ENCODE measurements at regions of chr6 and their contacts with region 1.

Region 1: DNA sequence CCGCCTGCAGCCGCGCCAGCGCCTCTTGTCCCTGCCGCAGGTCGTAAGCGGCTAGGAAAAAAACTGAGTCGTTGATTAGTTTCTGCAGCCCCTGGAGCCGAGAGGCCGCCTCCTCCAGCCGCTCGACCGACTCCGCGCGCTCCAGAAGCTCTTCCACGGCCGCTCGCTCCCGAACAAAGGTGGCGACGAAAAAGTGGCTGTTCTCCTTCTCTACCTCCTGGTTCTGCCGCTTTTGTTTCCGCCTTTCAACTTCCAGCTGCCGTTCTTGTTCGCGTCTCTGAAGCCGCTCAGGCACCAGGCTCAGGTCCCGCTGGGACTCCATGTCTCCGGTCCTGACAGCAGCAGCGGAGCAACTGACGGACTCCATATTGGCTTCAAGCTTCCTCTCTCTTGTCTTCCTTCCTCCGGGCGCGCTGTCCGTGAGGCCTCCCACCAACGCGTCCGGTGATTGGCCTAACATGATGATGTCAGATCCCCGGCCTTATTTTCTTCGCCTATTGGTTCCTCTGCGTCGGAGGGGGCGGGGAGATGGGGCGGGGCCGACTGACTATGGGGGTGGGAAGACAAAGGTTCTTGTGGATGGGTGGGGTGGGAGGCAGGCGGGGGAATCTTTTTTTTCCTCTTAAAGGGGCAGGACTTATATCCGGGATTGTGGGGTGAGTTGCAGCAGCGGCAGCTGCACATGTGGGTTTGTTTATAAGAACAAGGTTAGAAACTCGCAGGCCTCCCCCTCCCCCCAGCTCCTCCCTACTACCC is at the start of gene TBCC:
- DNase-seq: peak in 34 of 35 experiments; percentile 84 to 98 (median 94)
- ATAC-seq: peak; percentile 74 to 81 (median 76)
- H3K4me3 ChIP-seq: peak within 1 kb of the TSS; percentile 77 to 100
- H3K4me3 Mint-ChIP-seq: peak within 1 kb of the TSS; percentile 89 to 100 (median 100)
- H3K27ac ChIP-seq: peak within 1 kb of the TSS; percentile 92
- H3K27ac Mint-ChIP-seq: peak within 1 kb of the TSS; percentile 100
- H3K4me1 ChIP-seq: peaks cover 12 to 46% of the 10 kb centered on the region in 2 experiments
- H3K4me1 Mint-ChIP-seq: peaks cover 27 to 37% (median 33%) of the 10 kb centered on the region in 3 donors
- H3K27me3 ChIP-seq: peaks cover 0 to 2% of the 10 kb centered on the region in 2 experiments
- H3K27me3 Mint-ChIP-seq: no peaks in the 10 kb centered on the region
- total RNA-seq, gene TBCC: 56.5 to 74.8 (median 59.4) TPM

Region 2: GRCh38 chr6:42417641-42418112 is 328.2 kb before region 1 on chr6:
- CTCF ChIA-PET with region 1: interaction called in 1 of 2 experiments, 10 read pairs
- POLR2A ChIA-PET with region 1: no interaction called
- DNase-seq: peak in 34 of 35 experiments; percentile 17 to 74 (median 58)
- ATAC-seq: peak; percentile 88 to 91 (median 90)
- H3K4me3 ChIP-seq: no peak overlapping the region
- H3K4me3 Mint-ChIP-seq: peak overlapping the region; percentile 18 to 62 (median 54)
- H3K27ac ChIP-seq: no peak overlapping the region
- H3K27ac Mint-ChIP-seq: peak overlapping the region; percentile 80 to 85
- H3K4me1 ChIP-seq: peaks cover 10 to 36% of the 10 kb centered on the region in 2 experiments
- H3K4me1 Mint-ChIP-seq: peaks cover 74 to 84% (median 83%) of the 10 kb centered on the region in 3 donors
- H3K27me3 ChIP-seq: no peaks in the 10 kb centered on the region
- H3K27me3 Mint-ChIP-seq: no peaks in the 10 kb centered on the region

Region 3: DNA sequence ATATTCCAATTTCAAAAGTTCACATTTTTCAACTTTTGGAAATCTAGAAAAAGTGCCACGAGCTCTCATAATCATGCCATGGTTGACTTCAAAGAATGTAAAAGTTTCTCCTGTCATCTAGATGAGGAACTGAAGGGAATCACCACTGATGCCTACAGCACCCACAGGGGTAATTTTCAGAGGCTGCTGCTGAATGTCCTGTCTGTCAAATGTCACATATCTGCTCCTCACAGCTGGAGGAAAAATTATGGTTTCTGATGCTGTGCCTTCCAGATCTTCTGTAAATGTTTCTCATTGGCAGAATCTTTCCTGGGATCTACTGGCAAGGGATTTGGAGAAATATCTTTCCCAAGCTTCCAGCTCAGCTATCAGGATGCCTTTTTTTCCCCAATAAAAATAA is 261.6 kb before region 1 on chr6:
- CTCF ChIA-PET with region 1: no interaction called
- POLR2A ChIA-PET with region 1: no interaction called
- DNase-seq: no peak
- ATAC-seq: no peak
- H3K4me3 ChIP-seq: no peak overlapping the region
- H3K4me3 Mint-ChIP-seq: no peak overlapping the region
- H3K27ac ChIP-seq: no peak overlapping the region
- H3K27ac Mint-ChIP-seq: no peak overlapping the region
- H3K4me1 ChIP-seq: no peaks in the 10 kb centered on the region
- H3K4me1 Mint-ChIP-seq: no peaks in the 10 kb centered on the region
- H3K27me3 ChIP-seq: no peaks in the 10 kb centered on the region
- H3K27me3 Mint-ChIP-seq: no peaks in the 10 kb centered on the region

Region 4: DNA sequence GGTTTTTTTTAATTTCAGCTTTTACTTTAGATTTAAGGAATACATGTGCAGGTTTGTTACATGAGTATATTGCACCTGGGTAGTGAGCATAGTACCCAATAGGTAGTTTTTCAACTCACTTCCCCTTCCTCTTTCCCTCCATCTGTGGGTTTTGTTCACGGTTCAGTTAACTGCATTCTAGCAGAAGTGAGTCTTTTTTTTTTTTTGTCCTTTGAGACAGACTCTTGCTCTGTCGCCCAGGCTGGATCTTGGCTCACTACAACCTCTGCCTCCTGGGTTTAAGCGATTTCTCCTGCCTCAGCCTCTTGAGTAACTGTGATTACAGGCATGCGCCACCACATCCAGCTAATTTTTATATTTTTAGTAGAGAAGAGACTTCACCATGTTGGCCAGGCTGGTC is 173.4 kb before region 1 on chr6:
- CTCF ChIA-PET with region 1: no interaction called
- POLR2A ChIA-PET with region 1: no interaction called
- DNase-seq: peak in 2 of 35 experiments; percentile 23 to 47
- ATAC-seq: peak; percentile 55 to 94 (median 74)
- H3K4me3 ChIP-seq: no peak overlapping the region
- H3K4me3 Mint-ChIP-seq: peak overlapping the region; percentile 28 to 45 (median 36)
- H3K27ac ChIP-seq: peak overlapping the region; percentile 3
- H3K27ac Mint-ChIP-seq: peak overlapping the region; percentile 61 to 84
- H3K4me1 ChIP-seq: peaks cover 12 to 24% of the 10 kb centered on the region in 2 experiments
- H3K4me1 Mint-ChIP-seq: peaks cover 66 to 68% (median 67%) of the 10 kb centered on the region in 3 donors
- H3K27me3 ChIP-seq: no peaks in the 10 kb centered on the region
- H3K27me3 Mint-ChIP-seq: no peaks in the 10 kb centered on the region

Region 5: GRCh38 chr6:42726485-42727086 is 19.3 kb before region 1 on chr6:
- CTCF ChIA-PET with region 1: interaction called, 5 to 18 read pairs
- POLR2A ChIA-PET with region 1: interaction called, 3 to 6 read pairs
- DNase-seq: peak; percentile 32 to 94 (median 71)
- ATAC-seq: peak; percentile 95 to 97 (median 96)
- H3K4me3 ChIP-seq: peak overlapping the region; percentile 57 to 82
- H3K4me3 Mint-ChIP-seq: peak overlapping the region; percentile 82 to 94 (median 84)
- H3K27ac ChIP-seq: peak overlapping the region; percentile 73
- H3K27ac Mint-ChIP-seq: peak overlapping the region; percentile 95 to 99
- H3K4me1 ChIP-seq: peaks cover 0 to 17% of the 10 kb centered on the region in 2 experiments
- H3K4me1 Mint-ChIP-seq: peaks cover 20 to 23% (median 21%) of the 10 kb centered on the region in 3 donors
- H3K27me3 ChIP-seq: peaks cover 0 to 6% of the 10 kb centered on the region in 2 experiments
- H3K27me3 Mint-ChIP-seq: peaks cover 0 to 3% of the 10 kb centered on the region in 2 donors

Region 6: GRCh38 chr6:42771741-42772100 is 25.8 kb after region 1 on chr6:
- CTCF ChIA-PET with region 1: interaction called, 4 to 21 read pairs
- POLR2A ChIA-PET with region 1: interaction called, 20 to 67 read pairs
- DNase-seq: peak in 29 of 35 experiments; percentile 13 to 73 (median 36)
- ATAC-seq: peak; percentile 15 to 23 (median 16)
- H3K4me3 ChIP-seq: peak overlapping the region in 1 of 2 donors; percentile 31
- H3K4me3 Mint-ChIP-seq: peak overlapping the region; percentile 64 to 75 (median 75)
- H3K27ac ChIP-seq: peak overlapping the region; percentile 99
- H3K27ac Mint-ChIP-seq: peak overlapping the region; percentile 100
- H3K4me1 ChIP-seq: peaks cover 45 to 72% of the 10 kb centered on the region in 2 experiments
- H3K4me1 Mint-ChIP-seq: peaks cover 68 to 83% (median 81%) of the 10 kb centered on the region in 3 donors
- H3K27me3 ChIP-seq: no peaks in the 10 kb centered on the region
- H3K27me3 Mint-ChIP-seq: no peaks in the 10 kb centered on the region

Region 7: DNA sequence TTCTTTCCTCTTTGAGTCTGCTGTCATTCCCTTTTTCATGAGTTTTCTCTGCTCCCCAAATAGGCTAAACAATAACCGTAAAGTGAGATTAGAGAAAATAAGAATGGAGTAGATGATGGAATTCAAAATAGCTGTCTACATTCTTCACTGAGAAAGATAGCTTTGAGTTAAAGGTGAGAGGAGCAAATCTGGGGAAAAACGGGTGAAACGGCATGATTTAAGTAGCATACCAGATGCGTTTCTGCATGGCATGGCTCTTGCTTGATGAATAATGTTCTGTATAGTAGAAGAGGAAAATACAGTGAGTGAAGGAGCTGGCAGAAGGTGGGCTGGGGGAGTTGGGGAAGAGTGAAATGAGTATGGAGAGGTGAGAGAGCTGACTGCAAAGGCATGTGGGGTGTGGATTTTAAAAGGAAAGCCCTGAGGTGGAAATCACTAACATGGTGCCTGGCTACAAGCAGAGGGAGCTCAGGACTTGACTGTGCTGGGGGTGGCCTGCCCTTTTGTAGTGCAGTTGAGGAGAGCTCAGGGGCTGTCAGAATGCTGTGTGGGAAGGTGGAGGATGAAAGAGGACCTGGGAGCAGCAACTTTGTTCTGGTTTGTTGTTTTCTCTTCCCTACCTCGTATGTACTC is 44.8 kb after region 1 on chr6:
- CTCF ChIA-PET with region 1: interaction called in 1 of 2 experiments, 4 read pairs
- POLR2A ChIA-PET with region 1: interaction called, 4 to 19 read pairs
- DNase-seq: peak in 1 of 35 experiments; percentile 27
- ATAC-seq: peak in 1 of 4 experiments; percentile 19
- H3K4me3 ChIP-seq: no peak overlapping the region
- H3K4me3 Mint-ChIP-seq: no peak overlapping the region
- H3K27ac ChIP-seq: peak overlapping the region; percentile 30
- H3K27ac Mint-ChIP-seq: peak overlapping the region; percentile 74 to 78
- H3K4me1 ChIP-seq: peaks cover 33 to 46% of the 10 kb centered on the region in 2 experiments
- H3K4me1 Mint-ChIP-seq: peaks cover 6 to 29% (median 19%) of the 10 kb centered on the region in 3 donors
- H3K27me3 ChIP-seq: no peaks in the 10 kb centered on the region
- H3K27me3 Mint-ChIP-seq: no peaks in the 10 kb centered on the region

Region 8: GRCh38 chr6:42818878-42819277 is 73.0 kb after region 1 on chr6:
- CTCF ChIA-PET with region 1: no interaction called
- POLR2A ChIA-PET with region 1: interaction called, 9 to 11 read pairs
- DNase-seq: no peak
- ATAC-seq: no peak
- H3K4me3 ChIP-seq: no peak overlapping the region
- H3K4me3 Mint-ChIP-seq: no peak overlapping the region
- H3K27ac ChIP-seq: no peak overlapping the region
- H3K27ac Mint-ChIP-seq: peak overlapping the region; percentile 63 to 75
- H3K4me1 ChIP-seq: peaks cover 8% of the 10 kb centered on the region in 2 experiments
- H3K4me1 Mint-ChIP-seq: peaks cover 31 to 38% (median 35%) of the 10 kb centered on the region in 3 donors
- H3K27me3 ChIP-seq: no peaks in the 10 kb centered on the region
- H3K27me3 Mint-ChIP-seq: no peaks in the 10 kb centered on the region

Region 9: GRCh38 chr6:42928986-42929820 is 183.3 kb after region 1 on chr6 and contains the start of gene CNPY3:
- CTCF ChIA-PET with region 1: no interaction called
- POLR2A ChIA-PET with region 1: interaction called in 1 of 2 experiments, 25 read pairs
- DNase-seq: peak; percentile 85 to 98 (median 93)
- ATAC-seq: peak; percentile 85 to 87 (median 86)
- H3K4me3 ChIP-seq: peak within 1 kb of the TSS; percentile 77 to 84
- H3K4me3 Mint-ChIP-seq: peak within 1 kb of the TSS; percentile 86 to 99 (median 96)
- H3K27ac ChIP-seq: peak within 1 kb of the TSS; percentile 94
- H3K27ac Mint-ChIP-seq: peak within 1 kb of the TSS; percentile 98 to 99
- H3K4me1 ChIP-seq: peaks cover 16 to 53% of the 10 kb centered on the region in 2 experiments
- H3K4me1 Mint-ChIP-seq: peaks cover 42 to 51% (median 51%) of the 10 kb centered on the region in 3 donors
- H3K27me3 ChIP-seq: no peaks in the 10 kb centered on the region
- H3K27me3 Mint-ChIP-seq: no peaks in the 10 kb centered on the region
- total RNA-seq, gene CNPY3: 51.2 to 86.2 (median 79.4) TPM